ENCODE measurements at regions of chr2 and their contacts with region 1.

Region 1: DNA sequence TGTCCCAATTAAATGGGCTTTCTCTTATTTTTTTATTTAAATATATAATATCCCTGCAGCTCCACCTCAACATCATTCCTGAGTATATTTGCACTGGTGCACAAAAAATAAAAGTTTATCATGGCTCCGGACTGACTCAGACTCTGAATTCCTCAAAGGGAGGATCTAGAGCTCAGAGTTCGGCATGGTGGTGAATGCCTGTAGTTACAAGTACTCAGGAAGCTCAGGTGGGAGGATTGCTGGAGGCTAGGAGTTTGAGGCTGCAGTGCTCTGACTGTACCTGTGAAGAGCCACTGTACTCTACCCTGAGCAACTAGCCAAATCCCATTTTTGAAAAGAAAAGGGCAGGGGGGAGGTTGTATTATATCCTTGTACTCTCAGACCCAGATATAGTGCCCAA is 52.8 kb upstream of the NRXN1 start:
- DNase-seq: no peak
- H3K4me3 ChIP-seq: no peak overlapping the region
- H3K27ac ChIP-seq: no peak overlapping the region
- H3K4me1 ChIP-seq: no peaks in the 10 kb centered on the region
- H3K27me3 ChIP-seq: no peaks in the 10 kb centered on the region
- CTCF ChIP-seq: no peak
- POLR2A ChIP-seq: no peak

Region 2: GRCh38 chr2:51153236-51153635 is 68.5 kb after region 1 on chr2:
- CTCF ChIA-PET with region 1: no interaction called
- POLR2A ChIA-PET with region 1: no interaction called
- dilution Hi-C with region 1: no loop called
- intact Hi-C with region 1: no loop called
- DNase-seq: no peak
- H3K4me3 ChIP-seq: no peak overlapping the region
- H3K27ac ChIP-seq: no peak overlapping the region
- H3K4me1 ChIP-seq: no peaks in the 10 kb centered on the region
- H3K27me3 ChIP-seq: no peaks in the 10 kb centered on the region
- CTCF ChIP-seq: no peak
- POLR2A ChIP-seq: no peak

Region 3: DNA sequence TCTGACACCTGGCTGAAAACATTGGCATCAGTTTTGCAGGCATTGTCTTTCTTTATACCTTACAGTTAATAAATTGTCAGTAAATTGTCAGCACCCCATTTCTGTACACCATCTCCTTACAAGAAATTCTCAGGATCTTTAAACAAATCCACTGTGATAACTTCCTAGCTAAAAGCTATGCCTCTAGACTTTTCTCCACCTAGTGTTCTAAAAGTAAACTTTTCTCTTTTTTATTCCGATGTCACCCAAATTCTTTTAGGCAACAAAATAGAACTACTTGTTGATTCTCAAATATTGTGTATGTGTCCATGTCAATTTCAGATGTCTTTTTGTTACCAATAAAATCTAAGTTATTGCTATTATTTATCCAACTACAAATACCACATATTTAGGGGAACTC is 564.6 kb after region 1 on chr2:
- CTCF ChIA-PET with region 1: no interaction called
- POLR2A ChIA-PET with region 1: no interaction called
- dilution Hi-C with region 1: no loop called
- intact Hi-C with region 1: loop called (anchors 10 kb)
- DNase-seq: no peak
- H3K4me3 ChIP-seq: no peak overlapping the region
- H3K27ac ChIP-seq: no peak overlapping the region
- H3K4me1 ChIP-seq: no peaks in the 10 kb centered on the region
- H3K27me3 ChIP-seq: no peaks in the 10 kb centered on the region
- CTCF ChIP-seq: no peak
- POLR2A ChIP-seq: no peak

Measured in endothelial cell of umbilical vein (primary cell).